ENCODE measurements at regions of chr19 and their contacts with region 1.

Region 1: GRCh38 chr19:38693380-38694223 is 46.2 kb downstream of the ACTN4 start:
- DNase-seq: peak; percentile 97
- H3K4me3 Mint-ChIP-seq: peak overlapping the region; percentile 69
- H3K27ac Mint-ChIP-seq: peak overlapping the region; percentile 100
- H3K4me1 Mint-ChIP-seq: peaks cover 98% of the 10 kb centered on the region
- H3K27me3 Mint-ChIP-seq: no peaks in the 10 kb centered on the region
- CTCF ChIP-seq: no peak

Region 2: DNA sequence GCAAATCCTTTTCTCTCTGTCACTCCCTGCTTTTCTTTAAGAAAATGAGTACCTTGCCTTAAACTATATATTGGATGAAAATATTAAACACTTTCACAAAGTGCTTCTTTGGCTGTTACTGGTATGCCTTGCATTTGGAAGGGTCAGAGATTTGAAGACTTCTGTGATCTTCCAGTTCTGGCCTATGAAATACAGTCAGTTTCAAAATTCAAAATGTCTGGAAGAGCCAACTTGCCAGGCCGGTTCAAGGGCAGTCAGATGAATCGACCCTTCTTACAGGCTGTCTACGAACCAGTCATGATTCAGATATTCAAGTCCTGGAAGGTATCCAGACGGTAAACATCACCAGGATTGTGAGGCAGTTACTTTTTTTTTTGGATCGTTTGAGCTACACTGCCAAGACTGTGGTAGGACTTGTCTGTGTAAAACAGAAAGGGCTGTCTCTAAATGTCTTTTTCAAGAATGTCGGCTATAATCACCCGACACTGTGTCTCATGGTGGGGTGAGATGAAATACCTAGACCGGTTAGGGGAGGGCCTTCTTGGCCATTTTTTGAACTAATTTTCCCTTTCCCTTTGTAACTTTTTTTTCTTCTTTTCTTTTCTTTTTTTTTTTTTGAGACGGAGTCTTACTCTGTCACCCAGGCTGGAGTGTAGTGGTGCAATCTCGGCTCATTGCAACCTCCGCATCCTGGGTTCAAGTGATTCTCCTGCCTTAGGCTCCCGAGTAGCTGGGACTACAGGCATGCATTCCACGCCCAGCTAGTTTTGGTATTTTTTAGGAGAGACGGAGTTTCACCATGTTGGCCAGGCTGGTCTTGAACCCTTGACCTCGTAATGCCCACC is 34.9 kb before region 1 on chr19:
- CTCF ChIA-PET with region 1: interaction called, 19 read pairs
- intact Hi-C with region 1: loop called (anchors 2 kb)
- DNase-seq: peak; percentile 84
- H3K4me3 Mint-ChIP-seq: peak overlapping the region; percentile 99
- H3K27ac Mint-ChIP-seq: peak overlapping the region; percentile 100
- H3K4me1 Mint-ChIP-seq: peaks cover 91% of the 10 kb centered on the region
- H3K27me3 Mint-ChIP-seq: no peaks in the 10 kb centered on the region
- CTCF ChIP-seq: no peak

Region 3: DNA sequence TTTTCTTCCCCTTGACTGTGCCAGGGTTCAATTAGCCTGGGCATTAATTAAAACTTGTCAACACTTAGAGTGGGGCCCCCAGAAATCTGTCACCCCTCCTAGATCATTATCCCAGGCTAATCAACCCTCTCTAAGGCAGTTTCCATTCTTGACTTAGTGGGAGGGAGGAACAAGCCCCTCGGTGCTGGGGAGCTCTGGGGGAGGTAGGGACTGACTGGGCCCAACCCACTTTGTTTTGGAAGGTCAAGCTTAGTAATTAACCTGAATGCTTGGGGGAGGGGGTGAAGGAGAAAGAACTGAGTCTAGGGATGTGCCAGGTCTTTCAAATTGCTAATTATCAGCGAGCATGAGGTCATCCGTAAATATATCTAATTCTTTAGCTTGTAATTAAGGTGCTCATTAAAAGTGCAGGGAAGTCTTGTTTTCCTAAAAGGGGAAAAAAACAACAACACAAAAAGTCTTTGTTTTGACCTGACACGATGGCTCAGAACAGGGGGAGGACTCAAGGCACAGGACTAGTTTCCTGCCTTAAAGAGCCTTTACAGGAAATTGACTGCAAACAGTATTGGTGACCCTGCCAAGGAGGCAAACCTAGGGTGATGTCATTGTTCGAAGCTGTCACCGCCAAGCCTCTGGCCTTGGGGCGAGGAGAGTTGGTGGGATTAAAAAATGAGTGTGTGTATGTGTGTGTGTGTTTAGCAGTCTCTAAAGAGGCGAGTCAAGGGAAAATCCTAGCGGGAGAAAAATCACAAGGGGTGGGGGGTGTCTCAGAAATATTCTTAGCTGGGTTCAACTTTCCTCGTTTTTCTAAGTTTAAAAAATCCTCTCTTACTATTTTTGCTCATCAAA is 26.7 kb before region 1 on chr19:
- CTCF ChIA-PET with region 1: interaction called, 5 read pairs
- intact Hi-C with region 1: loop called (anchors 2 kb)
- DNase-seq: peak; percentile 74
- H3K4me3 Mint-ChIP-seq: peak overlapping the region; percentile 29
- H3K27ac Mint-ChIP-seq: peak overlapping the region; percentile 100
- H3K4me1 Mint-ChIP-seq: peaks cover 100% of the 10 kb centered on the region
- H3K27me3 Mint-ChIP-seq: no peaks in the 10 kb centered on the region
- CTCF ChIP-seq: no peak

Region 4: GRCh38 chr19:38683393-38684080 is 10.1 kb before region 1 on chr19:
- CTCF ChIA-PET with region 1: interaction called, 11 read pairs
- intact Hi-C with region 1: loop called (anchors 1 kb)
- DNase-seq: peak; percentile 99
- H3K4me3 Mint-ChIP-seq: peak overlapping the region; percentile 61
- H3K27ac Mint-ChIP-seq: peak overlapping the region; percentile 100
- H3K4me1 Mint-ChIP-seq: peaks cover 93% of the 10 kb centered on the region
- H3K27me3 Mint-ChIP-seq: no peaks in the 10 kb centered on the region
- CTCF ChIP-seq: no peak

Measured in Calu3 (cell line).